T-cell (primary cell): ENCODE measurements at regions of chr21 and their contacts with region 1.

Region 1: GRCh38 chr21:29360799-29361765 is 62.4 kb downstream of the BACH1 start:
- DNase-seq: peak in 7 of 35 experiments; percentile 4 to 36 (median 14)
- ATAC-seq: peak in 1 of 4 experiments; percentile 39
- H3K4me3 ChIP-seq: no peak overlapping the region
- H3K4me3 Mint-ChIP-seq: no peak overlapping the region
- H3K27ac ChIP-seq: no peak overlapping the region
- H3K27ac Mint-ChIP-seq: no peak overlapping the region
- H3K4me1 ChIP-seq: peaks cover 0 to 3% of the 10 kb centered on the region in 2 experiments
- H3K4me1 Mint-ChIP-seq: peaks cover 15 to 18% (median 17%) of the 10 kb centered on the region in 3 donors
- H3K27me3 ChIP-seq: no peaks in the 10 kb centered on the region
- H3K27me3 Mint-ChIP-seq: no peaks in the 10 kb centered on the region

Region 2: GRCh38 chr21:27690426-27690825 is 1670.7 kb before region 1 on chr21:
- CTCF ChIA-PET with region 1: no interaction called
- POLR2A ChIA-PET with region 1: no interaction called
- DNase-seq: no peak
- ATAC-seq: no peak
- H3K4me3 ChIP-seq: no peak overlapping the region
- H3K4me3 Mint-ChIP-seq: no peak overlapping the region
- H3K27ac ChIP-seq: no peak overlapping the region
- H3K27ac Mint-ChIP-seq: no peak overlapping the region
- H3K4me1 ChIP-seq: no peaks in the 10 kb centered on the region
- H3K4me1 Mint-ChIP-seq: no peaks in the 10 kb centered on the region
- H3K27me3 ChIP-seq: no peaks in the 10 kb centered on the region
- H3K27me3 Mint-ChIP-seq: peaks cover 0 to 7% of the 10 kb centered on the region in 2 donors

Region 3: GRCh38 chr21:29372063-29372802 is 11.2 kb after region 1 on chr21:
- CTCF ChIA-PET with region 1: interaction called, 3 to 11 read pairs
- POLR2A ChIA-PET with region 1: no interaction called
- DNase-seq: peak in 30 of 35 experiments; percentile 9 to 86 (median 34)
- ATAC-seq: peak; percentile 57 to 87 (median 69)
- H3K4me3 ChIP-seq: no peak overlapping the region
- H3K4me3 Mint-ChIP-seq: no peak overlapping the region
- H3K27ac ChIP-seq: no peak overlapping the region
- H3K27ac Mint-ChIP-seq: no peak overlapping the region
- H3K4me1 ChIP-seq: peaks cover 0 to 7% of the 10 kb centered on the region in 2 experiments
- H3K4me1 Mint-ChIP-seq: peaks cover 10 to 16% (median 10%) of the 10 kb centered on the region in 3 donors
- H3K27me3 ChIP-seq: no peaks in the 10 kb centered on the region
- H3K27me3 Mint-ChIP-seq: no peaks in the 10 kb centered on the region

Region 4: GRCh38 chr21:29849735-29850176 is 488.7 kb after region 1 on chr21:
- CTCF ChIA-PET with region 1: interaction called, 3 to 11 read pairs
- POLR2A ChIA-PET with region 1: no interaction called
- DNase-seq: peak in 31 of 35 experiments; percentile 1 to 58 (median 21)
- ATAC-seq: peak; percentile 79 to 82 (median 80)
- H3K4me3 ChIP-seq: no peak overlapping the region
- H3K4me3 Mint-ChIP-seq: no peak overlapping the region
- H3K27ac ChIP-seq: no peak overlapping the region
- H3K27ac Mint-ChIP-seq: no peak overlapping the region
- H3K4me1 ChIP-seq: no peaks in the 10 kb centered on the region
- H3K4me1 Mint-ChIP-seq: no peaks in the 10 kb centered on the region
- H3K27me3 ChIP-seq: no peaks in the 10 kb centered on the region
- H3K27me3 Mint-ChIP-seq: peaks cover 4 to 8% of the 10 kb centered on the region in 2 donors